ENCODE measurements at regions of chr12 and their contacts with region 1.

Region 1: GRCh38 chr12:68364893-68365725 is 32.9 kb upstream of the MDM1 start:
- DNase-seq: peak; percentile 90 to 96 (median 93)
- ATAC-seq: peak; percentile 94 to 99 (median 98)
- H3K4me3 ChIP-seq: peak overlapping the region in 11 of 12 donors; percentile 18 to 52 (median 44)
- H3K27ac ChIP-seq: peak overlapping the region; percentile 35 to 91 (median 86)
- H3K4me1 ChIP-seq: peaks cover 0 to 50% (median 20%) of the 10 kb centered on the region in 12 donors
- H3K27me3 ChIP-seq: no peaks in the 10 kb centered on the region
- CTCF ChIP-seq: peak in 3 of 12 donors; percentile 6 to 31 (median 25)
- POLR2A ChIP-seq: no peak

Region 2: DNA sequence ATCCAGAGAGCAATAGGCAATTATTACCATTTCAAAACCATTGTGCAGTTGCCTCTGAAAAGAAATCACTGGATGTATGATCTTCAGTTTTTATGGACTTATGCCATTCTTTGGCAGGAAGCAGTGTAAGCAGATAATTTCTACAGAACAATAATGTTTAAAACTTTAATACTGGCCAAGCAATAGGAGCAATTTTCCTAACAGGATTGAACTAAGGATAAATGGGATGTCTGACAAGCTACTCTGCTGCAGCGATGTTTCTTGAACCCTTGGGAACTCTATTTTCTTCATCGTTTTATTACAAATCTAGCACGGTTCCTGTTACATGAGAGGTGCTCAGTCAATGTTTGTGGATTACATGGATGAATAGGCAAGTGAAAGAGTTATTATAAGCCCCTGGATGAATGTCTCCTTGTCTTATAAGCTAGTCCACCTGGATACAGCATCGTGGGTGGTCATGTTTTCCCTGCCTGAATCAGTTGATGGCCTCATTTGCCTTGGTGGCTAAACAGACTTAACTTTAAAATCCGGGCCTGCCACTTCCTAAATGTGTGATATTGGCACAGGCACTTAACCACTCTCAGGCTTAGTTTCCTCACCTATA is 35.2 kb after region 1 on chr12:
- intact Hi-C with region 1: loop called in 8 of 10 experiments (anchors 2 to 5 kb)
- DNase-seq: no peak
- ATAC-seq: no peak
- H3K4me3 ChIP-seq: no peak overlapping the region
- H3K27ac ChIP-seq: peak overlapping the region in 1 of 12 donors; percentile 12
- H3K4me1 ChIP-seq: peaks cover 0 to 26% (median 9%) of the 10 kb centered on the region in 12 donors
- H3K27me3 ChIP-seq: no peaks in the 10 kb centered on the region
- CTCF ChIP-seq: no peak
- POLR2A ChIP-seq: no peak

Region 3: DNA sequence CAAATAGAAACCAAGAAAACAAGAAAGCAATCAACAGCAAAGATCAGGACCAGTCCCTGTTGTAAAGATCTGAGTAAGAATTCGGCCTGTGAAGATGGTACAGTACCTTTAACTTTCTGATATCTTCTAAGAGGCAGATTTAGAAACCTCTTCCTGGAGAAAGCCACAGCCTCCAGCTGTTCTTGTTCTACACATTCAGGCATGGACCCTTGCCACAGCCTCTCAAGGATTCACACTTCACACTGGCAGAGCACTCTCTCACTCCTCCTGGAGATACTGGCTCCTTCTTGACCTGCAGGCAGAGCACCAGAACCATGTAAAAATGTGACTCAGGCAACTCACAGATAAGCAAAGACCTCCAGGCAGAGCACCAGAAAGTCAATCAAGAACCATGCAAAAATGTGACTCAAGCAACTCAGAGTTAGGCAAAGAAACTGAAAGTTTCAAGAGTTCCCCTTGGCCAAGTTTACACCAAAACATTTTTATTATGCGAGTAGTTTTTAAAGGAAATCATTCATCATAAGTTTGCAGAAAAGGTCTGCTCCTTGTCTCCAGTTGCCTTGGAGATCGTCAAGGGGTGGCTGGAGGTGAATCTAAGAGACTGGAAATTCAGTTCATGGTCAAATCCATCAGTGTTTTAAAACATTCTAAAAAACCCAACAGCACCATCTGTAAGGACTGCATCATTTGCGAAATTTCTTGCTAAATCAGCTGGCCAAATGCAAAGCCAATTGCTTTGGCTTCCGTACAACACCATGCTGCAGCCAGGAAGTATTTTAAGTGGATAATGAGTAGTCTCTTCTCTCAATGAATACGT is 86.4 kb after region 1 on chr12:
- intact Hi-C with region 1: loop called in 3 of 10 experiments (anchors 5 to 10 kb)
- DNase-seq: peak in 4 of 5 donors; percentile 16 to 47 (median 26)
- ATAC-seq: peak in 3 of 4 donors; percentile 35 to 69 (median 63)
- H3K4me3 ChIP-seq: peak overlapping the region in 6 of 12 donors; percentile 1 to 32 (median 18)
- H3K27ac ChIP-seq: peak overlapping the region in 7 of 12 donors; percentile 15 to 68 (median 52)
- H3K4me1 ChIP-seq: peaks cover 0 to 68% (median 43%) of the 10 kb centered on the region in 12 donors
- H3K27me3 ChIP-seq: no peaks in the 10 kb centered on the region
- CTCF ChIP-seq: no peak
- POLR2A ChIP-seq: no peak

Region 4: DNA sequence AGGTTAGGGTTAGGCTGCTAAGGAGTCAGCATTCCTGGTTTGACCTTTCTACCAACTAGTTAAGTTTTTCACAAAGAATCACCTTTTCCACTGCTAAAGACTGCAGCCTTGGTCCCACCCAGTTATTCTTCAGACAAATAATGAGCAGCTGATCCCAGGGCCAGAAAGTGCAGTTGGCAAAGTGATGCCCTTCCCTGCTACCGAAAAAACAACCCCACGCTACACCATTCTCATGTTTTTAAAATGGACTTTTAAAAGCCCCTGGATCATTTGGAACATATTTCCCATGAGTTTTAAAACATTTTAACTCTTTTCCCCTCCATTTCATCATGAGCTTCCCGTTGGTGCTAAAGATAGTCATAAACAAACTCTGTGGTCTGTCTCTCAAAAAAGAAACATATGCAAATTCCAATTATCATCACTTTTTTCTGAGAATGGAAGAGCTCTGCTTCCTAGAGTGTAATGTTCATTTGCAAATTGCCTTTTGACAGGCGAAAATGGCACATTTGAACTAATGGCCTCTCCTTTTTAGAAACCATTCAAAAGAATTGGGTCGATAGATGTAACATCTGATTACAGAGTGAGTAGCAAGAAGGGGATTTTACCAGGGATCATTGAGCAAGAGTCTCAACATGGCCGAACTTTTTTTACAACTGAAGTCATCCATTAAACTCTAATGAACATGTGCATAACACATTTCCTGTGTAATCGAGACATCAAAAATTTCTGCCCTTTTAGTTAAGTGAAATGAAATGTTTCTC is 116.3 kb after region 1 on chr12:
- intact Hi-C with region 1: no loop called
- DNase-seq: no peak
- ATAC-seq: no peak
- H3K4me3 ChIP-seq: no peak overlapping the region
- H3K27ac ChIP-seq: peak overlapping the region in 5 of 12 donors; percentile 3 to 64 (median 13)
- H3K4me1 ChIP-seq: peaks cover 0 to 31% (median 0%) of the 10 kb centered on the region in 12 donors
- H3K27me3 ChIP-seq: no peaks in the 10 kb centered on the region
- CTCF ChIP-seq: no peak
- POLR2A ChIP-seq: no peak

Region 5: DNA sequence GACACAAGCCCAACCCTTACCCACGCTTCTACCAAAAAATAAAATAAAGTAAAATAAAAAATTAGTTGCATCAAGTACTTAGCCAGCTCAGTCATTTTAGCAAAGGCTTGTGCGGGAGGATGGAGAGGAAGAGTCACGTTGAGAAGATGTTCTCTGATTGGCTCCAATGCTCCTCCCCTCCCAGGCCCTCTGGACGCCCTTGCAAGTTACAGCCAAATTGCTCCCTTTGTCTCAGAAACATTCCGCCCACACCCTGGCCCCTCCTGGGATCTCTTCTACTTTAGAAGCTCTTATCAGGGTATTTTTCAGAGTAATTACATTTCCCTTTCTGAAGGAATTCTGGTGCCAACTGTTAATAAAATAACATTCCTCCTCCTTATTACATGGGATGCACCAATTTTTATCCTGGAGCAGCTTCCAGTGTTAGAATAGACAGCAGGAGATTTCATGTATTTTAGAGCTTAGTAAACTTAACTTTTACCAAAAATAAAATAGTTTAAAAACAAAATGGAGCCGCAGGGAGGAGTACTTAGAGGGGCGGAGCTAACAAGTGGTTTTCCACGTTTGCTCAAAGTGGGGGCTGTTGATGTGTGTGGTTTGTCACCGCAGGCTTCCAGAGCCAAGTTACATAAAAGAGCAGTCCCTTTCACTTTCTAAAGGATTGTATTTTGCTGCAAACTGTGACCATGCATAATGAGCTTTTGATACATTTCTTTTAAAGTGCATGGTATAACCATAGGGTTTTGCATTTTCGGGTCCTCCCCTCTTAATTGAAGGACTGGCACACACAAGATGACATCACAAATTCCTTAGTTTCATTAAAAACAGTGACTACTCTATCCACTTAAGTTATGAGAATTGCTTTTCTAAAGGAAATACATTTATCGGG is 173.9 kb after region 1 on chr12:
- intact Hi-C with region 1: loop called in 5 of 10 experiments (anchors 5 to 10 kb)
- DNase-seq: peak; percentile 76 to 83 (median 81)
- ATAC-seq: peak; percentile 89 to 97 (median 94)
- H3K4me3 ChIP-seq: peak overlapping the region in 9 of 12 donors; percentile 4 to 52 (median 40)
- H3K27ac ChIP-seq: peak overlapping the region; percentile 26 to 86 (median 76)
- H3K4me1 ChIP-seq: peaks cover 0 to 24% (median 9%) of the 10 kb centered on the region in 12 donors
- H3K27me3 ChIP-seq: no peaks in the 10 kb centered on the region
- CTCF ChIP-seq: no peak
- POLR2A ChIP-seq: no peak

Region 6: GRCh38 chr12:68686595-68687521 is 321.7 kb after region 1 on chr12 and contains the start of gene NUP107:
- intact Hi-C with region 1: loop called in 2 of 10 experiments (anchors 5 to 10 kb)
- DNase-seq: peak; percentile 98 to 99 (median 99)
- ATAC-seq: peak; percentile 99
- H3K4me3 ChIP-seq: peak within 1 kb of the TSS; percentile 43 to 98 (median 85)
- H3K27ac ChIP-seq: peak within 1 kb of the TSS; percentile 43 to 81 (median 74)
- H3K4me1 ChIP-seq: peaks cover 0 to 23% (median 10%) of the 10 kb centered on the region in 12 donors
- H3K27me3 ChIP-seq: no peaks in the 10 kb centered on the region
- CTCF ChIP-seq: peak in 1 of 12 donors; percentile 21
- POLR2A ChIP-seq: peak in 1 of 2 donors; percentile 51
- total RNA-seq, gene NUP107: 12.8 to 27.0 (median 21.2) TPM